ENCODE measurements at regions of chr10 and their contacts with region 1.

Region 1: DNA sequence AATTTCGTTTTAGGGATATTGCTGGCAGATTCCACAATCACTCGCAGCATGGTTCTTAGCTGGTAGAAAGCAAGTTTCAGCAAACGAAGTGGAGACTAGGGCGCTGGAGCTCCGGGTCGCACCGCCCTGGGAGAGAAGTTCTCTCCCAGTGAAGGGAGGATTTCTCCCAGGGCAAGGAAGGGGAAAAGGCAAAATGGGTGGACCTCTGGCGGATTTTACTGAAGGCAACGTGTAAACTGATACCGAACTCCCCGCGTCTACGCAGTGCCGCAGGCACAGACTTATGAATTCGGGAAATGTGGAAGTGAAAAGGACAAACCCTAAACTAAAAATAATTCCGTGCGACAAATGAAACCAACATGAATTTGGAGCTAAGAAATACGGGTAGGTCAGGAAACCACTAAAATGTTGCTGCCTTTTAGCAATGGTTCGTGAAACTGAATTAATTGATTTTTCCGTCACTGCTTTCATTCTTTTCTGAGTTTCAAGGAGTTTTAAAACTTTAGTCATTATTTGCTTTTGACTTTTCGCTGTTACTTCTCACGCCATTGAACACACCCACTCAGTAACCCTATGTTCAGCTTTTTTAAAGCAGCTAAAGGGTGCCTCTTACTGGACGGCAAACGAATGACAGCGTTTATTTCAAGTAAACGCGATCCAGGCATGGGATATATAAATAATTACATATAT is at the start of gene MYOF:
- DNase-seq: peak in 2 of 3 donors; percentile 72 to 83
- ATAC-seq: peak; percentile 90
- H3K4me3 ChIP-seq: peak within 1 kb of the TSS; percentile 21
- H3K4me1 ChIP-seq: no peaks in the 10 kb centered on the region
- CTCF ChIP-seq: peak; percentile 21
- total RNA-seq, gene MYOF: 55.0 to 90.7 (median 85.5) TPM

Region 2: DNA sequence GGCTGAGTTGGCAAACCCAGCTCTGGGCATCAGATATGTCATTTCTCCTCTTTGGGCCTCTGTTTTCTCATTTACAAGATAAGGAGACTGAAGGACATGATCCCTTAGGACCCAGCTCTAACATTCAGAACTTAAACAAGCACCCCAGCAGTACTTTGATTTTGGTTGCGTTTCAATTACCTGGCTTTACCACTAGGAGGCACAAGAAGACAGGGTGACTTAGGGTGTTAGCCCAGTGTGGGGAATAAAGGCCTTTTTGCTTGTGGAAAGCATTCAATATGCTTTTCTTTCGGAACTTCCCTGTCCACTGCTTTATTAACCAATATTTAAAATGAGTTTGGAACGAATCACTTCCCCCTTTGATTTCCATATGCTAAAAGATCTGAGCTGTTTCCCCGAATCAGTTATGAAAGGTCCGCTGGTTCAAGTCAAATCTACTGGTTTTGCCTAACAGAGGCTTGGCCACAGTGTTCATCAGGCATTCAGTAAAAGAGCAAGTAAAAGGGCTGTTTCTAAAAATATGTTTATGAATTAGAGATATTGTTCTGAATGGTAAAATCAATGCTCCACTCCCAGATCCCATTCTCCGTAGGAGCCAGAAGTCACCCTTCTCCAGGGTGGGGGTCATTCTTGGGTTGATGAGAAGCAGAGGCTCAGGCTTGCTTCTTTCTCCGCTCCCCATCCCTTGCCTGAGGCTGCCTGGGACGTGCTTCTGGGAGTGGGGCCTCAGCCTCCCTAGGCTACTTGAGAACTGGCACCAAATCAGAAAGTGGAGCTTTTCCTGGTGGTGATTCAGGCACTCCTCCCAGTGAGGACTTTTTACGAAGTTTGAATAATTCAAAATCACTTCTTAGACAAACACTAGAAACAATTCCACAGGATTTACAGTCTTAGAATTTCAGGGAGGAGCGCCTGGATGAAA is 105.7 kb before region 1 on chr10:
- intact Hi-C with region 1: loop called (anchors 2 to 5 kb)
- DNase-seq: peak; percentile 36 to 74 (median 50)
- ATAC-seq: peak; percentile 92
- H3K4me3 ChIP-seq: no peak overlapping the region
- H3K4me1 ChIP-seq: no peaks in the 10 kb centered on the region
- CTCF ChIP-seq: peak; percentile 84

Region 3: GRCh38 chr10:93386631-93387369 is 95.5 kb before region 1 on chr10:
- intact Hi-C with region 1: no loop called
- DNase-seq: peak in 2 of 3 donors; percentile 28 to 50
- ATAC-seq: peak; percentile 47
- H3K4me3 ChIP-seq: no peak overlapping the region
- H3K4me1 ChIP-seq: no peaks in the 10 kb centered on the region
- CTCF ChIP-seq: no peak

Region 4: GRCh38 chr10:93790439-93790838 is 308.1 kb after region 1 on chr10:
- intact Hi-C with region 1: no loop called
- DNase-seq: no peak
- ATAC-seq: no peak
- H3K4me3 ChIP-seq: no peak overlapping the region
- H3K4me1 ChIP-seq: no peaks in the 10 kb centered on the region
- CTCF ChIP-seq: no peak

Region 5: DNA sequence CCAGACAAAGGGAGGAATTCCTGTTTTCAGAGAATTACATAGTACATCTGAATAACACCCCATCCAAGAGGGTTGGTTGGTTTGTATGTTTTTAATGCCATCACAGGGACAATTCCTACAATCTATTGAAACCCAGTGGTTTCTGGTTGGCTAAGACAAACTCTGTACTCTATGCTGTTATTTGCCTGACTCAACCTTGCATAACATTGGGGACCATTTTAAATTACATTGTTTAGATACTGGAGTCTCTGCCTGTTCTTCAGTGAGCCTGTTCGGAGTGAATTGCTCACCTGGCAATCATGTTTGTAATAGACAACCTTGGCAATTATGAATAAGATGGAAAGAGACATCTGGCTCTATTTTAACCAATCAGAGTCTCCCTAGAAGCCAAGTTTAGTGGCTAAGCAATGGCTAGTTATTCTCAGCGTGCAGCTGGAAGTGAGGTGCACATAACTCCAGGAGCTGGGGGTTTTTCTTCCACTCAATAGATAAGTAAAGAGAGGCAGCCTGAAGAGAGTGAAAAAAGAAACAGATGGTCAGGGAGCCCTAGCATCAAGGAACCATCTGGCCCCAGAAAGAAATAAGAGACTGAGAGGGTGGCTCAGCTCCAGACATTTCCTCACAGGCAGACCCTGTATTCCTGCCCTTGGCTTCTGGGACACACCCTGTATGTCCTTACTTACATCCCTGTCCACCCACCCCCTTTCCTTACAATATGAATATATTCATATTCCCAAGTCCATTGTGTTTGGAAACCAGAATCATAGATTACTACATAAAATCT is 390.3 kb after region 1 on chr10:
- intact Hi-C with region 1: no loop called
- DNase-seq: no peak
- ATAC-seq: no peak
- H3K4me3 ChIP-seq: no peak overlapping the region
- H3K4me1 ChIP-seq: no peaks in the 10 kb centered on the region
- CTCF ChIP-seq: no peak